ENCODE measurements at regions of chr12 and their contacts with region 1.

Region 1: GRCh38 chr12:110280779-110281548 is at the start of gene ATP2A2:
- DNase-seq: peak; percentile 90
- H3K4me3 ChIP-seq: peak within 1 kb of the TSS; percentile 63
- H3K27ac ChIP-seq: peak within 1 kb of the TSS; percentile 95
- H3K4me1 ChIP-seq: no peaks in the 10 kb centered on the region
- H3K27me3 ChIP-seq: no peaks in the 10 kb centered on the region
- CTCF ChIP-seq: no peak
- total RNA-seq, gene ATP2A2: 248 to 311 TPM

Region 2: GRCh38 chr12:110224379-110225304 is 56.3 kb before region 1 on chr12:
- intact Hi-C with region 1: loop called (anchors 5 kb)
- DNase-seq: no peak
- H3K4me3 ChIP-seq: peak overlapping the region; percentile 16
- H3K27ac ChIP-seq: peak overlapping the region; percentile 40
- H3K4me1 ChIP-seq: no peaks in the 10 kb centered on the region
- H3K27me3 ChIP-seq: no peaks in the 10 kb centered on the region
- CTCF ChIP-seq: peak; percentile 38